ENCODE measurements at regions of chr19 and their contacts with region 1.

Region 1: GRCh38 chr19:48646001-48646721 is at the start of gene CA11:
- DNase-seq: peak; percentile 88 to 96
- ATAC-seq: peak; percentile 85 to 95 (median 88)
- H3K4me3 ChIP-seq: peak within 1 kb of the TSS; percentile 79
- H3K4me3 Mint-ChIP-seq: peak within 1 kb of the TSS; percentile 92
- H3K27ac ChIP-seq: peak within 1 kb of the TSS; percentile 93
- H3K27ac Mint-ChIP-seq: peak within 1 kb of the TSS; percentile 89 to 95
- H3K4me1 ChIP-seq: peaks cover 51% of the 10 kb centered on the region
- H3K4me1 Mint-ChIP-seq: peaks cover 22 to 36% of the 10 kb centered on the region in 2 donors
- H3K27me3 ChIP-seq: no peaks in the 10 kb centered on the region
- H3K27me3 Mint-ChIP-seq: peaks cover 0 to 3% of the 10 kb centered on the region in 2 donors
- CTCF ChIP-seq: peak; percentile 75
- total RNA-seq, gene CA11: 9.2 to 11.9 (median 11.0) TPM

Region 2: DNA sequence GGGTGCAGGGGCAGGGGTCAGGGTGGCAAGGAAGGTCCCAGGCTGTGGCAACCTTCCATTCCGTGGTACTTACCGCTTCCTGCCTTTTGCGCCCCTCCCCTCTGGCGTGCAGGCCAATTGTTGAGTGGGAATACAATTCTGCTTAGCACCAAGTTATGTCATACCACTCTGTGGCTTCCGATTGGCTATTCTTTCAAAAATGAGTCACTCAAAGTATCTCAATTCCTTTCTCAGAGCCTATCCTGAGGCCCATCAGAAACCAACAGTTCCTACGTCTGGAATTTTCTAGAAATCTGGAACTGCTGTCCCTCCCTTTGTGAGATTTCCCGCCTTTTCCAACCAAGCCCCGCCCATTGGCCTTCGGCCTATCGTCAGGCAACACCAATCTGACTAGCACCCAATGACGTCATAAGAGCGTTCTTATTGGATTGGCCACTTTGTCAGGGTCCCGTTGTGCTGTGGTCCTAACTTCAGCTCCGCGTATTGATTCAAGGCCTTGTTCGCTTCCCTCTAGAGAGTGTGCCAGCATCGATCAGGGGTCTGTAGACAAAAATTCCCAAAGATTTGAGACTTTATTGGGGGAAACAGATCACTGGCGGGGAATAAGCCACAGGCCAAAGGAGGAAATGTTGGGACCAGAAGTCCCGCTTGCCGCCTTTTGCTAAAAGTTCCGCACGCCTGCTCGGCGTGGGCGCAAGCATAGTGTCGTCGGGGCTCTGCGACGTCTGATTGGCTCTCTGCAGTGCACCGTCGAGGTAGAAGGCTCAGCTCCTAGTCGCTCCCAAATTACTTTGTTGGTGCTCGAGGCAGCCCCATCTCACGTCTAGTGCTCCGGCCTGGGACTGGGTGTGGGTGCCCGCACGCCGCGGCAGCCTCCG is 14.9 kb after region 1 on chr19:
- intact Hi-C with region 1: loop called (anchors 2 kb)
- DNase-seq: peak; percentile 67 to 92
- ATAC-seq: peak; percentile 89 to 94 (median 90)
- H3K4me3 ChIP-seq: peak overlapping the region; percentile 1
- H3K4me3 Mint-ChIP-seq: peak overlapping the region; percentile 79
- H3K27ac ChIP-seq: peak overlapping the region; percentile 69
- H3K27ac Mint-ChIP-seq: peak overlapping the region; percentile 90
- H3K4me1 ChIP-seq: peaks cover 17% of the 10 kb centered on the region
- H3K4me1 Mint-ChIP-seq: peaks cover 8% of the 10 kb centered on the region in 2 donors
- H3K27me3 ChIP-seq: no peaks in the 10 kb centered on the region
- H3K27me3 Mint-ChIP-seq: peaks cover 0 to 3% of the 10 kb centered on the region in 2 donors
- CTCF ChIP-seq: no peak

Region 3: DNA sequence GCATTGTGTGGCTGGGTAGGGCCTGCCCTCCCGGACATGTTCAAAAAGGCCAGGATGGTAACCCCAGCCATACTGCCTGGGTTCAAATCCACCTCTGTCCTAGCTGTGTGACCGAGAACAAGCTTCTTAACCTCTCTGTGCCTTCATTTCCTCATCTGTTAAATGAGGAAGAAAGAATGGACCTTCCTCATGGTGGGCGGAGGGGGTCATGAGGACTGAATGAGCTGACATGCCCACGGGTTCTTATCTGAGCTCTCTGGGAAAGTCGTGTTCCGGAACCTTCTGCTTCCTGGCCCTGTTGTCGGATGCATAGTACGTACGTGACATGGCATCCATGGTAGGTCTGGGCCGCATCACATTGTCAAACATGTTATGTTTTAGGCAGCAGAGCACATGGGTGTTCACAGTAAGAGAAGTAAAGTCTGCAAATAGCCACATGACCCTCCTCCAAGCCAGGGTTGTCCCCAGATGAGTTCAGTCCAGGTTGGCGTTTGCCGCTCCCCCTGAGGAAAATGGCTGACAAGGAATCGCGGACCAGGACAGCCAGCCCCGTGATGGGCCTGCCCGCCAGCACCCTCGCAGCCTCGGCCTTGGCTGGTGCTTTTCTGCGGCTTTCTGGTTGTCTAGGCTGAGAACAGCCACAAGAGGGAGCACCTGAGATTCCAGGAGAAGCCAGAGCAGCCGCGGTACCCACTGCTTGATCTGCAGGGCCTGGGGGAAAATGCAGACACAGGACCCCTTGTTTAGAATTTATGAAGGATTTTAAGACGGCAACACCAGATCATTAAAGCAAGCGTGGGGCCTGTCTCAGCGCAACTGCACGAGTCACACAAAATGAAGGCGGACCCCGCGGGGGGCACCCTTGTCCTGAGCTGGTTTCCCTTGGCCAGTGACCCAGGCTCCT is 29.0 kb after region 1 on chr19:
- intact Hi-C with region 1: loop called (anchors 1 kb)
- DNase-seq: peak; percentile 59 to 91
- ATAC-seq: peak; percentile 74 to 98 (median 98)
- H3K4me3 ChIP-seq: no peak overlapping the region
- H3K4me3 Mint-ChIP-seq: no peak overlapping the region
- H3K27ac ChIP-seq: no peak overlapping the region
- H3K27ac Mint-ChIP-seq: peak overlapping the region in 1 of 2 donors; percentile 52
- H3K4me1 ChIP-seq: peaks cover 8% of the 10 kb centered on the region
- H3K4me1 Mint-ChIP-seq: peaks cover 7 to 8% of the 10 kb centered on the region in 2 donors
- H3K27me3 ChIP-seq: no peaks in the 10 kb centered on the region
- H3K27me3 Mint-ChIP-seq: peaks cover 0 to 3% of the 10 kb centered on the region in 2 donors
- CTCF ChIP-seq: peak; percentile 74

Region 4: GRCh38 chr19:48738557-48739399 is 92.6 kb after region 1 on chr19:
- intact Hi-C with region 1: loop called (anchors 5 kb)
- DNase-seq: peak; percentile 71 to 93
- ATAC-seq: peak; percentile 87 to 91 (median 88)
- H3K4me3 ChIP-seq: no peak overlapping the region
- H3K4me3 Mint-ChIP-seq: peak overlapping the region; percentile 56
- H3K27ac ChIP-seq: peak overlapping the region; percentile 45
- H3K27ac Mint-ChIP-seq: peak overlapping the region in 1 of 2 donors; percentile 49
- H3K4me1 ChIP-seq: peaks cover 25% of the 10 kb centered on the region
- H3K4me1 Mint-ChIP-seq: peaks cover 8 to 24% of the 10 kb centered on the region in 2 donors
- H3K27me3 ChIP-seq: peaks cover 9% of the 10 kb centered on the region
- H3K27me3 Mint-ChIP-seq: no peaks in the 10 kb centered on the region
- CTCF ChIP-seq: no peak

Region 5: DNA sequence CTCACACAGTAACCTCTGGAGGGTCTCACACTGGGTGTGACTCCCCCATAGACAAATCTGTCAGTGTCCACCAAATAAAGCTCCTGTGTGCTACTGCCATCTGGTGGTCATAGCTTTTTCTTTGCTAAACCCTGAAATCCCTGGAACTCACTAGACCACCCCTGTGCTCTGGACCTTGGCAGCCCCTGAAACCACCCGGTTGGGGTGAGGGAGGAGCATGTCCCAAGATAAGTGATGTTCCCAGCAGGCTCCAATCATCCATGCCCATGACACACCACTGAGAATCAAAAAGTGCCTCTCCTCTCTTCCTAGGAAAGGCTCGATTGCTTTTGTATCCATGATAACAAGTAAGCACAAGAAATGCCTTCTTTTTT is 196.6 kb after region 1 on chr19:
- intact Hi-C with region 1: loop called (anchors 2 kb)
- DNase-seq: peak; percentile 23 to 82
- ATAC-seq: peak; percentile 67 to 80 (median 73)
- H3K4me3 ChIP-seq: no peak overlapping the region
- H3K4me3 Mint-ChIP-seq: no peak overlapping the region
- H3K27ac ChIP-seq: no peak overlapping the region
- H3K27ac Mint-ChIP-seq: peak overlapping the region in 1 of 2 donors; percentile 4
- H3K4me1 ChIP-seq: no peaks in the 10 kb centered on the region
- H3K4me1 Mint-ChIP-seq: peaks cover 0 to 5% of the 10 kb centered on the region in 2 donors
- H3K27me3 ChIP-seq: no peaks in the 10 kb centered on the region
- H3K27me3 Mint-ChIP-seq: peaks cover 0 to 2% of the 10 kb centered on the region in 2 donors
- CTCF ChIP-seq: peak; percentile 82

Region 6: GRCh38 chr19:48965040-48965805 is 319.1 kb after region 1 on chr19 and contains the start of gene FTL:
- intact Hi-C with region 1: loop called (anchors 10 kb)
- DNase-seq: peak; percentile 83 to 92
- ATAC-seq: peak; percentile 66 to 91 (median 81)
- H3K4me3 ChIP-seq: peak within 1 kb of the TSS; percentile 87
- H3K4me3 Mint-ChIP-seq: peak within 1 kb of the TSS; percentile 100
- H3K27ac ChIP-seq: peak within 1 kb of the TSS; percentile 82
- H3K27ac Mint-ChIP-seq: peak within 1 kb of the TSS; percentile 98 to 99
- H3K4me1 ChIP-seq: peaks cover 63% of the 10 kb centered on the region
- H3K4me1 Mint-ChIP-seq: peaks cover 51 to 63% of the 10 kb centered on the region in 2 donors
- H3K27me3 ChIP-seq: no peaks in the 10 kb centered on the region
- H3K27me3 Mint-ChIP-seq: no peaks in the 10 kb centered on the region
- CTCF ChIP-seq: no peak
- total RNA-seq, gene FTL: 554 to 1,168 (median 1,024) TPM